Lower leg skin (tissue), 4 donors: ENCODE measurements at regions of chr5 and their contacts with region 1.

Region 1: GRCh38 chr5:135829681-135830383 is 4.6 kb upstream of the SLC25A48 start:
- DNase-seq: peak; percentile 59 to 92
- H3K4me3 ChIP-seq: no peak overlapping the region
- CTCF ChIP-seq: peak in 1 of 3 donors; percentile 24
- POLR2A ChIP-seq: no peak

Region 2: DNA sequence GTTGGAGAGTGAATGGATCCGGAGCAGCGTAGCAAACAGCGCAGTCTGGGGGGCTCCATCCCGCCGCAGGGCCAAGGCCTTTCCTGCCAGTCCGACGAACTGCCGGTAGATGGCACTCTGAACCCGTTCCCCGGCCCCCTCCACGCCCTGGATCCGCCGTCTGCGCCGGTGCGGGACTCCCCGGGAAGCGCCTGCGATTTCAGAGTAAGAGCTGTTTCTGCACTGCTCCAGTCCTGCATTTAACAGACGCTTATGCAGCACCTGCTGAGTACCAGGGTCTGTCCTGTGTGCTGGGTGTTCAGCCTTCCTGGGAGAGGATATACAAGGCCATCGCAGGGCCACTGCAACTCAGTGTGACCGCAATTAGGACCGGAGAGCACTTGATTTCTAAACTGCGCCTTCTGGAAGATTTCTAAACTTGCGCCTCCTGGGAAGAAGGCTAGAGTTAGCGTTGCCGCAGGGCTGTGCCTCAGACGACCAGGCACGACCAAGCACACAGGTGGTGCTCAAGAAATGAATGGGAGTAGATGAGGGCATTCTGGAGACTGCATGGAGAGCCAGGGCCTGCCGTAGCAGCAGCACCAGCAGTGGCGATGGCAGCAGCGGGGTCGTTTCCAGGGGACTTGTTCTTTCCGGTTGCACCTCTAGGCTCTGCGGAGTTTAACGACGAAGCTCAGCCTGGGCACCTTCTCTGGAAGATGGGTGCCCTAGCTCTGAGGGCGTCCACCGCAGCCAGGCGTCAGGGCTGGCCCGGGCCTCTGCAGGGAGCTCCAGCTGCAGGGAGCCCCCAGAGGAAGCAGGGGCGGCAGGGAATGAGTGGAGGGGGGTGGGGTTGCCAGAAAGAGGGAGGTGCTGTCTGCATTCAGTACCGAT is 363.4 kb before region 1 on chr5:
- intact Hi-C with region 1: loop called (anchors 10 kb)
- DNase-seq: peak; percentile 49 to 95
- H3K4me3 ChIP-seq: no peak overlapping the region
- CTCF ChIP-seq: no peak
- POLR2A ChIP-seq: no peak

Region 3: DNA sequence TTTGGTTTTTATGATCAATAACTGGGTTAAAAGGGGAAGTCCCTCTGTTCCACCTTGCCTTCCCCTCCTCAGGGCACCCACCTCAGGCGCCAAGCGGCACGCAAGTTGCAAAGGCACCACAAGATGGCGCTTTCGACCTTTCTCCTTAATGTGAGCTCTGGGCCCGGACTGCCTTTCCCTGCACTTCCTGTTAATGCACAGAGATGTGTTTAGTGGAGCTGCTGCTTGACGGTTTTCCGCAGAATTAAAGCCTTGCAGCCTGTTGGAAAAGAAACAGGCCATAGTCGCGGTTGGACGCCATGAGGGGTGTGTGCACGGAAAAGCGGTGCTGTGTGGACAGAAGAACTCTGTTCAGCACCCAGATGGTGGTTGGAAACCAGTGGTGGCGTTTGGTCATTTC is 269.0 kb before region 1 on chr5:
- intact Hi-C with region 1: loop called (anchors 5 kb)
- DNase-seq: peak; percentile 75 to 93
- H3K4me3 ChIP-seq: no peak overlapping the region
- CTCF ChIP-seq: no peak
- POLR2A ChIP-seq: no peak

Region 4: DNA sequence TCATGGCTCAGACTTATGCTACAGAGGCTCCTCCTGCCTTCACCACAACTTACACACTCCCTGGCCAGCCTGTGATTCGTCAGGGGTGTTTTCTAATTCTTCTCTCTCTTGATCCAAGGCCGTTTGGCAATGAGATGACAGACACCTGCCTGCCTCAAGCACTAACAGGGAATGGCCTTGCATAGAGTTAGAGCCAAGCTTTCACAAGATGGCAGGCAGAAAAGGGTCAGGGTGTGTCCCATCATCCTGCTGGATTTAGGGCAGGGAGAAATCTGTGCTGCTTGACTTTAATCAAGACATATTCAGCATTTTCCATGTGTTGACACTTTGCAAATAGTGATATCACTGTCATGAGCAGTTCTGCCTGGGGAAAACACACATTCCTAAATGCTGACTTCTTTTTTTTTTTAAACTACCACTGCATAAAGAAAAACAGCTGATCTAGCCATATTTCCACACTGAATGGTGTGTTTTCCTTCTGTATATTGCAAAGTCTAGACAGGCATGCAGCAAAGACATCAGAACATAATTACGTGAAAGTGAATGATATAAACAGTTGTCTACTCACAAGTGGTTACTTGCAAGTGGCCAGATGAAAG is 90.3 kb before region 1 on chr5:
- intact Hi-C with region 1: no loop called
- DNase-seq: peak; percentile 53 to 67
- H3K4me3 ChIP-seq: no peak overlapping the region
- CTCF ChIP-seq: no peak
- POLR2A ChIP-seq: no peak

Region 5: DNA sequence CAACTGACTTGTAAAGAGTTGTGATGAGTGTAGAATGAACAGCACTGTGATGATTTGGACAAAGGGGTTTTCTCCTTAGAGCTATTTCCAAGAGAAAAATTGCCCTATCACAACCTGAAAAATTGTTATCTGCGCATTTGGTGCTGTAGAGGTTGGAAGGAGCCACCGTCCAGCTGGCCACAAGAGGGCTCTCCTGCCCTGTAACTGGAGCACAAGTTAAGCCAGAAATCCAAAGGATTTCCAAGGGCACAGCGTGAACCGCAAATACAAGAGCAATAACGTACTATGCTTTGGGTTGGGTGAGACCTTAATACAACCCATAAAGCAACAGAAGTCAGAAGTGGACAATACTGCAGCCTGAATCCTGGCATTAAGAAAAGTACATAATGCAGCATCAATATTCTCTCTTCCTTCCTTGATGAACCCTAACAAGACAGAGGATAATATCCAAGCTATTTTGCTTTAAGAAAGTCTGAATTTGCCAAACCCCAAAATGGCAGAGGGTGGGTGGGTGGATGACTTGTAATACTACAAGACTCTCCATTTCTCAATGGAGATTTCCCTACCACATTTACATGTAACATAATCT is 419.9 kb after region 1 on chr5:
- intact Hi-C with region 1: no loop called
- DNase-seq: peak in 1 of 2 donors; percentile 17
- H3K4me3 ChIP-seq: no peak overlapping the region
- CTCF ChIP-seq: no peak
- POLR2A ChIP-seq: no peak